ENCODE measurements at regions of chr2 and their contacts with region 1.

Region 1: GRCh38 chr2:234135720-234136221 is 85.3 kb downstream of the SPP2 start:
- DNase-seq: peak; percentile 72
- ATAC-seq: peak; percentile 87
- H3K4me3 Mint-ChIP-seq: no peak overlapping the region
- H3K27ac Mint-ChIP-seq: no peak overlapping the region
- H3K4me1 Mint-ChIP-seq: peaks cover 23% of the 10 kb centered on the region
- H3K27me3 Mint-ChIP-seq: no peaks in the 10 kb centered on the region

Region 2: DNA sequence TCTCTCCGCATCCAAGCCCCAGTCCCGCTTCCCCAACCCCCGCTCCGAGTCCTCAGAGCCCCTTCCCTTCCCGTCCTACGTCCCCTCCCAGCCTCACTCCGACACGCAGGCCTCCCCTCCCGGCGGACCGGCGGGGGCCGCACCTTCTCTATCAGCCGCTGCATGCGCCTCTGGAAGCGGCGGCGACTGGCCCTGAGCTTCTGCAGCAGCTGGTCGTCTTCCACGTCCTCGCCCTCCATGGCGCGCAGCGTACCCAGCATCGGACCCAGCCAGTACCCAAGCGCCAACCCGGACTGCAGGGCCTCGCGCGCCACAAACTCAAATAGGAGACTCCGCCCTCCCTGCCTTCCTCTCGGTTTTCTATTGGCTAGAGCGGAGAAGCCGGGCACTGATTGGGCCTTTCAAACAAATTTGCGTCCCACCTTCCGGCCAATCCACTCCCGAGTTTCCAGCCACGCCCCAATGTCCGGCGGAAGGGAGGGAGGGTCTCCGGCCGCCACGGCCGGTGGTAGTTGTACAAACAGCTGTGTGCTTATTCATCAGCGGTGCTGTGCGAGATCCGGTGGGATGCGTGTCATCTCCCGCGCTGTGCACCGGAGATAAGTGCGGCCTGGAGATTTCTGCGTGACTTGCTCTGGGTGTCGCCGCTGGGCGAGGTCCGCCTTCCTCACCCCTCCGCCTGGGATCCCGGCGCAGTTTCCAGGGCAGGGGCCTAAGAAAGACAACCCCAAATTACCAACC is 281.4 kb before region 1 on chr2 and contains the start of gene HJURP:
- CTCF ChIA-PET with region 1: no interaction called
- POLR2A ChIA-PET with region 1: no interaction called
- intact Hi-C with region 1: loop called in 1 of 2 experiments (anchors 10 kb)
- DNase-seq: peak; percentile 96
- ATAC-seq: peak; percentile 95
- H3K4me3 Mint-ChIP-seq: peak within 1 kb of the TSS; percentile 97
- H3K27ac Mint-ChIP-seq: peak within 1 kb of the TSS; percentile 98
- H3K4me1 Mint-ChIP-seq: peaks cover 26% of the 10 kb centered on the region
- H3K27me3 Mint-ChIP-seq: no peaks in the 10 kb centered on the region
- total RNA-seq, gene HJURP: 94.6 to 111 TPM

Region 3: GRCh38 chr2:233922483-233922882 is 213.3 kb before region 1 on chr2:
- CTCF ChIA-PET with region 1: no interaction called
- POLR2A ChIA-PET with region 1: no interaction called
- intact Hi-C with region 1: no loop called
- DNase-seq: no peak
- ATAC-seq: no peak
- H3K4me3 Mint-ChIP-seq: no peak overlapping the region
- H3K27ac Mint-ChIP-seq: no peak overlapping the region
- H3K4me1 Mint-ChIP-seq: peaks cover 5% of the 10 kb centered on the region
- H3K27me3 Mint-ChIP-seq: peaks cover 16% of the 10 kb centered on the region

Region 4: DNA sequence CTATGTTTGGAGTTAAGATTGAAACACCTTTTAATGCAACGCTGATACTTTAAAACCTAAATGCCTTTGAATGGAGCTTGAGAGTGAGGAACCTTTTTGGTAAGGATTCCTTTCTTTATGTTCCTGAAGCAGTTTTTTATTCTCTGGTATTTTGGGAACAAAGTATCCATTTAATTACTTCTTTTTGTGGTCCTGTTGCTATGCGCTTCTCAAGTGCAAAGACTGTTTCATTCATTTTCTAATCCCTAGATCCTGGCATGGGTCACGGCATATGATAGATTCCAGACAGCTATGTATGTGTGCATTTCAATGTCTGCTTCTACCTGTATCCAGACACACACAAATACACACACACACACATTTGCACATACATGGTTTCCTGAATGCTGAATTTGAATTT is 190.6 kb before region 1 on chr2:
- CTCF ChIA-PET with region 1: no interaction called
- POLR2A ChIA-PET with region 1: no interaction called
- intact Hi-C with region 1: no loop called
- DNase-seq: no peak
- ATAC-seq: no peak
- H3K4me3 Mint-ChIP-seq: no peak overlapping the region
- H3K27ac Mint-ChIP-seq: no peak overlapping the region
- H3K4me1 Mint-ChIP-seq: no peaks in the 10 kb centered on the region
- H3K27me3 Mint-ChIP-seq: peaks cover 26% of the 10 kb centered on the region

Region 5: DNA sequence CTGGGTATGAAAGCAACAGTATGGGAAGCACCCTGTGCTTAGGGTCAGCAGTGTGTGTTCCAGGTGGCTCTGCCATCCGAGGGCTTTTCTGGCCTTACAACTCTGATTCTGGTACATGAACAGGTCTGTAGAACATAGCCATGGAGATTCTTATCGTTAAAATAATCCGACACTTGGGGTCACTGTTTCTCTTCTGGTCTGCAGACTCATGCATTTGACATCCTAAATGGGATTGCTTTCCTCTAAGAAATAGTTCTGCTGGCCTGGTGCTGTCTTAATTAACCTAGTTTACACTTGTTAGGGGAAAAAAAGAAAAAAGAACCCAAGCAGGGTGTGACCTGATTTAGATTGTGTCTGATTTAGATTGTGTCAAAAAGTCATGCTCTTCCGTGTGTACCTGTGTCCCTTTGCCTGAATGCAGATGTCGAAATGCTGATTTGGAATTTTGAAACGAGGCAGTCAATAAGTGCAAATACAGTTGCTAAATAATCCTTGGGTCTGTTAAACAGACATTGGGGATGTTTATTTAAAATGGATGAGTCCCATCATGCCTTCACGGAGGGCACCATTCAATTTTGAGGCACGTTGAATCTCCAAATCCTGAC is 159.0 kb before region 1 on chr2:
- CTCF ChIA-PET with region 1: interaction called, 3 read pairs
- POLR2A ChIA-PET with region 1: no interaction called
- intact Hi-C with region 1: loop called (anchors 5 to 10 kb)
- DNase-seq: no peak
- ATAC-seq: no peak
- H3K4me3 Mint-ChIP-seq: no peak overlapping the region
- H3K27ac Mint-ChIP-seq: no peak overlapping the region
- H3K4me1 Mint-ChIP-seq: peaks cover 22% of the 10 kb centered on the region
- H3K27me3 Mint-ChIP-seq: no peaks in the 10 kb centered on the region

Region 6: DNA sequence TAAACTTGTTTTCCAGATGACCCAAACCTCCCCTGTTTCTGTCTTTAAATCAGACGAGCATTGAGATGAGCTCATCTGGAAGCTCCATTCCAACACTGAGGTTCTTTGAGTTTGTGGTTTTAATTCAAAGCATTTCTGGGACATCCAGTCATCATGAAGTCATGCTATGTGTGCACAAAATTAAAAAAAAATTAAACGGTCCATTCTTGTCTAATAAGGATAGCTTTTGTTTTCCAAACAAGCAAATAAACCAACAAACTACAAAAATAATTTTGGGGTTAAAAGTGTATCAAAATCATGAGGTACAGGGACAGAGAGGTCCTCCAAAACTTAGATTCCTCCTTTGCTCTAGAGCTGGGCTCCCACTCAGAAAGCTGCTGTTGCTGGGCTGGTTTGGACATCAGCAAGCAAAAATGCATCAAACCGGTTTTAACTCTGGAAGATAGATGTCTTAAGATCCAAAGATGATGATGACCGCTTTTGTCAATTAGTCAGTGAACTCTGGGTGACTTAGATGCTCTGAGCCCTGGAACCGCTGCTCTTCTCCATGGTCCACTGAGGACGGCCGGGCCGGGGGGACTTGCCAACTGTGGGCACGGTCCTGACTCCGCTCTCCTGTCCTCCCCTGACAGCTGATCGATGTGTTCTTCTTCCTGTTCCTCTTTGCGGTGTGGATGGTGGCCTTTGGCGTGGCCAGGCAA is 153.2 kb before region 1 on chr2:
- CTCF ChIA-PET with region 1: no interaction called
- POLR2A ChIA-PET with region 1: no interaction called
- intact Hi-C with region 1: loop called (anchors 5 to 10 kb)
- DNase-seq: no peak
- ATAC-seq: no peak
- H3K4me3 Mint-ChIP-seq: no peak overlapping the region
- H3K27ac Mint-ChIP-seq: no peak overlapping the region
- H3K4me1 Mint-ChIP-seq: peaks cover 12% of the 10 kb centered on the region
- H3K27me3 Mint-ChIP-seq: peaks cover 2% of the 10 kb centered on the region

Region 7: DNA sequence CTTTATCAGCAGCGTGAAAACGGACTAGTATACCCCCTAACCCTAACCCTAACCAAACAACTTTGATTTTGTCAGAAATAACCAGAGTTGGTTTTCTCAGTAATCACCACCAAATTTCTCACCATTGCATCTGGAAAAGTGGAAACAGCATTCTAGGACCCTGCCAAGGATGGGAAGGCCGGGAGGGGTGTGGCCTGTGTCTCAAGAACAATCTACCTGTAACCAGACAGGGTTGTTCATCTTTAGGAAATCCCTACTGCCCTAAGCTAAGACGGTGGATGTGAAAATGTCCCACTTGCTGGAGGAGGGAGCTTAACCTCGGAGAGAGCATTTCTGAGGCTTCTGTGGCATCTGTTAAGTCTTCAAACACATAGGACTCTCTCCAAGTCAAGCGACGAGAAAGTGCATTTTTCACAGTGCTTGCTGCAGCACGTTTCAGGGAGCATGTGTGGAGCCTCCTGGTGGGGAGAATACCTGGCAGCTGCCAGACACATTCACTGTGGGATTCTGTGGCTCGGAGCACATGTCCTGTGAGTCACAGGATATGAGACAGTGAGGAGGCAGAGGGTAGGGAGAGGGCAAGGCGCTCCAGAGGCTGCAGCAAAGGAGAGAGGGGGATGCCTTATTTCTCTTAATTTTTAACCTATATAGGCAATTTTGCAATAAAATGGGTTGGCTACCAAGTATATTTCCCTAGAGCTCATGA is 122.2 kb after region 1 on chr2:
- CTCF ChIA-PET with region 1: interaction called, 3 read pairs
- POLR2A ChIA-PET with region 1: no interaction called
- intact Hi-C with region 1: loop called in 1 of 2 experiments (anchors 5 kb)
- DNase-seq: peak; percentile 65
- ATAC-seq: peak; percentile 94
- H3K4me3 Mint-ChIP-seq: no peak overlapping the region
- H3K27ac Mint-ChIP-seq: no peak overlapping the region
- H3K4me1 Mint-ChIP-seq: peaks cover 18% of the 10 kb centered on the region
- H3K27me3 Mint-ChIP-seq: no peaks in the 10 kb centered on the region

Region 8: GRCh38 chr2:234269769-234270204 is 134.0 kb after region 1 on chr2:
- CTCF ChIA-PET with region 1: interaction called, 9 read pairs
- POLR2A ChIA-PET with region 1: no interaction called
- intact Hi-C with region 1: loop called in 1 of 2 experiments (anchors 5 kb)
- DNase-seq: no peak
- ATAC-seq: no peak
- H3K4me3 Mint-ChIP-seq: no peak overlapping the region
- H3K27ac Mint-ChIP-seq: peak overlapping the region; percentile 21
- H3K4me1 Mint-ChIP-seq: peaks cover 49% of the 10 kb centered on the region
- H3K27me3 Mint-ChIP-seq: no peaks in the 10 kb centered on the region

Region 9: DNA sequence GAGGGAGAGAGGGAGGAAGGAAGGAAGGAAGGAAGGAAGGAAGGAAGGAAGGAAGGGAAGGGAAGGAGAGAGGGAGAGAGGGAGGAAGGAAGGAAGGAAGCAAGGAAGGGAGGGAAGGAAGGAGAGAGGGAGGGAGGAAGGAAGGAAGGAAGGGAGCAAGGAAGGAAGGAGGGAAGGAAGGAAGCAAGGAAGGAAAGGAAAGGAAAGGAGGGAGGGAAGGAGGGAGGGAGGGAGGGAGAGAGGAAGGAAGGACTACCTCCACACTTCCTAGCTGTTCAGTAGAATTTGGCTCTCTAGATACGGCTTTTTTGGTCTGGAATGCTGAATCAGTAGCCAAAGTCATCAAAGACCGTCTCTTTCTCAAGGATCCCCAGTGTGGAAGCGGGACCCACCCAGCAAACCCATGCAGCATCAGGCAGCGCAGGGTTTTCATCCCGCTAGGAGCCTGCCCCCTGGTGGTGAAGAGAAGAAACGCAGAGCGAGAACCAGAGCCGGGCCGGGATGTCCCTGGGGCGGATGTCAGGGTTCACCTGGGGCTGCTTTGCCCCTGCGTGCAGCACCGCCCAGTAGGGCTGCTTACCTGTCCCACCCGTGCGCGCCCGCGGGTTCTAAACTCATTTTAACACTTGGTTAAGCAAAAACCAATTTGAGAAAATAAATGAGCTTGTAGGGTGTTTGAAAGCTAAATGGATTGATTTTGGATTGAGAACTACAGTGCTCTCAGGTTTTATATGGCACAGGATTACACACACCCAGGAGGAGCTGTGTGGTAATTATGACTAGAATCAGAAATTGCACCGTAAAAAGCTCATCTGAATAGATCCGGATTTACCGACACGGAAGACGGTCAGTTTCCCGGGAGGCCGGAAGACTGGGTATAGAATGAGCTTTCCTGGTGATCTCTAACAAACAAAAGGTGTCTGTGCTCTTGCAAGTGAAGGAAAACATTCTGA is 409.2 kb after region 1 on chr2:
- CTCF ChIA-PET with region 1: interaction called, 20 read pairs
- POLR2A ChIA-PET with region 1: no interaction called
- intact Hi-C with region 1: loop called (anchors 1 kb)
- DNase-seq: peak; percentile 86
- ATAC-seq: peak; percentile 96
- H3K4me3 Mint-ChIP-seq: no peak overlapping the region
- H3K27ac Mint-ChIP-seq: no peak overlapping the region
- H3K4me1 Mint-ChIP-seq: no peaks in the 10 kb centered on the region
- H3K27me3 Mint-ChIP-seq: peaks cover 10% of the 10 kb centered on the region